HepG2 (cell line): ENCODE measurements at regions of chr11 and their contacts with region 1.

Region 1: GRCh38 chr11:56624661-56625110 is 10.0 kb upstream of the OR5M1 start:
- DNase-seq: peak; percentile 55
- ATAC-seq: peak; percentile 70
- H3K4me3 ChIP-seq: no peak overlapping the region
- H3K27ac ChIP-seq: no peak overlapping the region
- H3K4me1 ChIP-seq: no peaks in the 10 kb centered on the region
- H3K27me3 ChIP-seq: no peaks in the 10 kb centered on the region
- CTCF ChIP-seq: peak; percentile 26; the same call in 1 of the 2 replicates
- EP300 ChIP-seq: no peak
- POLR2A ChIP-seq: no peak
- RAD21 ChIP-seq: no peak

Region 2: GRCh38 chr11:56783448-56784041 is 158.9 kb after region 1 on chr11:
- CTCF ChIA-PET with region 1: interaction called, 10 read pairs
- POLR2A ChIA-PET with region 1: no interaction called
- in situ Hi-C with region 1: loop called (anchors 10 kb)
- intact Hi-C with region 1: loop called (anchors 1 kb)
- DNase-seq: peak; percentile 49
- ATAC-seq: peak; percentile 39; the same call in 2 of the 3 replicates
- H3K4me3 ChIP-seq: no peak overlapping the region
- H3K27ac ChIP-seq: no peak overlapping the region
- H3K4me1 ChIP-seq: no peaks in the 10 kb centered on the region
- H3K27me3 ChIP-seq: no peaks in the 10 kb centered on the region
- CTCF ChIP-seq: peak; percentile 65
- EP300 ChIP-seq: no peak
- POLR2A ChIP-seq: no peak
- RAD21 ChIP-seq: no peak